Breast epithelium (tissue), 4 donors: ENCODE measurements at regions of chr9 and their contacts with region 1.

Region 1: GRCh38 chr9:136619742-136620440 is 42.8 kb upstream of the EGFL7 start:
- DNase-seq: peak in 1 of 2 donors; percentile 42
- H3K4me3 ChIP-seq: no peak overlapping the region
- H3K27ac ChIP-seq: no peak overlapping the region
- H3K4me1 ChIP-seq: peaks cover 0 to 5% of the 10 kb centered on the region in 2 donors
- H3K27me3 ChIP-seq: no peaks in the 10 kb centered on the region
- CTCF ChIP-seq: no peak
- POLR2A ChIP-seq: no peak

Region 2: GRCh38 chr9:135971892-135972291 is 648.0 kb before region 1 on chr9:
- intact Hi-C with region 1: no loop called
- DNase-seq: peak; percentile 56 to 79
- H3K4me3 ChIP-seq: no peak overlapping the region
- H3K27ac ChIP-seq: no peak overlapping the region
- H3K4me1 ChIP-seq: no peaks in the 10 kb centered on the region
- H3K27me3 ChIP-seq: peaks cover 0 to 23% of the 10 kb centered on the region in 2 donors
- CTCF ChIP-seq: no peak
- POLR2A ChIP-seq: no peak

Region 3: DNA sequence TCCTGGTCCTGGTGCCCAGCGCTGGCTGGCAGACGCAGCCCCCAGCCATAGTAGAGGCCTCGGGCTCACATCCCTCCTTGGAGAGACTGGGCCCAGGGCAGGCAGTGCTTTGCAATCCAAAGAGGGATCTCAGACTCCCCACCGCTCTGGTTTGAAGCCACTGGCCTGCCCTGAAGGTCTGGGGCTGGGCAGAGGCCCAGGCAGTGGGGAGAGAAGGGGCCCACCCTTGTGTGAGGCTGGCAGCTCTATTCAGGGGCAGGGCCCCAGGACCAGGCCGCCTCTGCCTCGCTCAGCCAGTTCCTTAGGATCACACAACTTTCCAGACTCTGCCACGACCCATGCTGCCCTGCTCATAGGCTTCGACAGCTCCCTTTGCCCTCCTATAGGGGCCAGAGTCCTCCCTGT is 126.3 kb before region 1 on chr9:
- intact Hi-C with region 1: loop called (anchors 5 kb)
- DNase-seq: no peak
- H3K4me3 ChIP-seq: no peak overlapping the region
- H3K27ac ChIP-seq: no peak overlapping the region
- H3K4me1 ChIP-seq: no peaks in the 10 kb centered on the region
- H3K27me3 ChIP-seq: no peaks in the 10 kb centered on the region
- CTCF ChIP-seq: no peak
- POLR2A ChIP-seq: no peak

Region 4: DNA sequence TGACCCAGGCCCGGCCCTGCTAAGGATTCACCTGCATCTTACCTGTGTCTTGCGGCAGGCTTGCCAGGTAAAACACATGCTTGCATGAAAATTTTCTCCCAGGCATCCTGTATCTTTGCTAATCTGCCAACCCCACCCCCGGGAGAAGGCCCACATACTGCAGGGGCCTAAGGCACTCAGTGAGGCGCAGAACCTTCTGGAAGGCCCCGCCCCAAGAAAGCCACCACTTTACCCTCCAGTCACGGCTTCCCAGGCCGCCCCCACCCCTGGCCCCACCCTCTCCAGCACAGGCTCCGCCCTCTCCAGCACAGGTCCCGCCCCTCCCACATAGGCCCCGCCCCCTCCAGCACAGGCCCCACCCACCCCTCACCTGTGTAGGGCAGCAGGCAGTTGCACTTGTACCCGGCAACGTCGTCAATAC is 107.2 kb before region 1 on chr9:
- intact Hi-C with region 1: no loop called
- DNase-seq: no peak
- H3K4me3 ChIP-seq: peak overlapping the region in 1 of 3 donors; percentile 3
- H3K27ac ChIP-seq: peak overlapping the region; percentile 58 to 85
- H3K4me1 ChIP-seq: no peaks in the 10 kb centered on the region
- H3K27me3 ChIP-seq: no peaks in the 10 kb centered on the region
- CTCF ChIP-seq: no peak
- POLR2A ChIP-seq: no peak

Region 5: GRCh38 chr9:137326445-137327065 is 706.7 kb after region 1 on chr9:
- intact Hi-C with region 1: loop called (anchors 5 kb)
- DNase-seq: no peak
- H3K4me3 ChIP-seq: no peak overlapping the region
- H3K27ac ChIP-seq: no peak overlapping the region
- H3K4me1 ChIP-seq: no peaks in the 10 kb centered on the region
- H3K27me3 ChIP-seq: no peaks in the 10 kb centered on the region
- CTCF ChIP-seq: no peak
- POLR2A ChIP-seq: no peak